PC-9 (cell line): ENCODE measurements at regions of chr2 and their contacts with region 1.

Region 1: GRCh38 chr2:241584423-241584822 is 25.9 kb downstream of the BOK start:
- DNase-seq: peak; percentile 88 to 92
- H3K4me3 ChIP-seq: no peak overlapping the region
- H3K27ac ChIP-seq: peak overlapping the region; percentile 79
- H3K4me1 ChIP-seq: peaks cover 16% of the 10 kb centered on the region
- H3K27me3 ChIP-seq: no peaks in the 10 kb centered on the region
- CTCF ChIP-seq: no peak

Region 2: DNA sequence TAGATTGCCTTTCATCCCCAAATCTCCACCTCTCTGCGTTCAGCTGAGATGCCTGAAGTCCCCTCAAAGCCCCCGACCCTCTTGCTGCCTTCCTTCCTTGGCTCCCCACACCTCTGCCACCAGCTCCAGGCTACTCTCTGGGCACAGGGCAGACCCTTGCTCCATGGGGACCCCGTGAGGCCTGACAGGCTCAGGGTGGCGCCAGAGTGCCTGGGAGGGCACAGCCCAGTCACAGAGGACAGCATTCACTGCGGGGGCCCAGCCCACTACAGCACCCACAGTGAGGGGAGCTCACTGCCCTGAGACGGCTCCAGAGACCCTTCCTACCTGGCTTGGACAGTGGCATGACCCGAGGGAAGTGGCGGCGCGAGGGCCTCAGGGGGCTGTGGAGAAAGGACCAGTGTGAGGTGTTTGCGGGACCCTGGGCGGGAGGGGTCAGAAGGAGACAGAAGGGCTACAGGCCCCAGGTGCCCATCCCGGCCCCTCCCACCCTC is 841.8 kb before region 1 on chr2:
- CTCF ChIA-PET with region 1: no interaction called
- POLR2A ChIA-PET with region 1: no interaction called
- intact Hi-C with region 1: no loop called
- DNase-seq: no peak
- H3K4me3 ChIP-seq: no peak overlapping the region
- H3K27ac ChIP-seq: no peak overlapping the region
- H3K4me1 ChIP-seq: no peaks in the 10 kb centered on the region; the same call in 1 of the 2 replicates
- H3K27me3 ChIP-seq: peaks cover 47% of the 10 kb centered on the region
- CTCF ChIP-seq: no peak

Region 3: GRCh38 chr2:240936106-240936505 is 648.3 kb before region 1 on chr2:
- CTCF ChIA-PET with region 1: no interaction called
- POLR2A ChIA-PET with region 1: interaction called, 15 read pairs
- intact Hi-C with region 1: no loop called
- DNase-seq: no peak
- H3K4me3 ChIP-seq: no peak overlapping the region
- H3K27ac ChIP-seq: no peak overlapping the region
- H3K4me1 ChIP-seq: 0 out of 2 replicates have a peak, but pooled peaks cover 7% of the 10 kb centered on the region
- H3K27me3 ChIP-seq: peaks cover 58% of the 10 kb centered on the region
- CTCF ChIP-seq: no peak